ENCODE measurements at regions of chr6 and their contacts with region 1.

Region 1: DNA sequence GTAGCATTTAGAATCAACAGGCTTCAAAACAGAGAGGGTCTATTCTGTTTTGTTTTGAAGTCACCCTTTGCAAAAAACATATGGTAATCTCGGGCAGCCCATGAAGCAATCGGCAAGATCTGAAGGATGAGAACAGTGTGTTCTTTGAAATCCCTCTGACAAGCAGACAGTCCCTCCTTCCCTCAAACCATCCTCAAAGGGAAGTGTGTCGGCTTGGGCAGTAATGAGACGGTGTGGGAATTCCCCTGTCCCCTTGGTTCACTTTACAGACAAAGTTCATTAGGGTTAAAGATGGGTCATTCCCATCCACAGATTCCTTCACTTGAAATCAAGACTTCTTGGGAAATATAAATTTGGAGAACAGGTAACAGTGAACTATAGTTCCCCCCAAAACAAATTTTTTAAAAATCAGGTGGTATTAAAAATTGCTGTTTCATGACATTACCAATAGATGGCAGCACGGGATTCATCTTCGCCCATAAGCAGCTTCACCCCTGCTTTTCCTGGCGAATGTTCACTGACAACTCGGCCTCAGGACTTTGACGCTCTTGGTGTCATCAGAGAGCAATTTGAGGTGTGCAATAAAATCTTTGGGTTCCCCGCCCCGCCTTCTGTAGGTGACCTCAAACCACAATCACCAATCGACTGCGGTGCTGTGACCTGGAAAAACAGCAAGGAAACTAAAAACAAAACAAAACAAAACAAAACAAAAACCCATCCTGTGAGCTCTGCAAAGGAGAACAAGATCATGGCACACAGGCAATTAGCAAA is 159.3 kb upstream of the TNFAIP3 start:
- DNase-seq: peak; percentile 57 to 98 (median 76)
- ATAC-seq: peak; percentile 76
- H3K4me3 ChIP-seq: no peak overlapping the region
- H3K4me3 Mint-ChIP-seq: peak overlapping the region; percentile 75
- H3K27ac ChIP-seq: peak overlapping the region; percentile 67 to 89
- H3K27ac Mint-ChIP-seq: peak overlapping the region; percentile 88
- H3K4me1 ChIP-seq: peaks cover 57% of the 10 kb centered on the region
- H3K4me1 Mint-ChIP-seq: peaks cover 54% of the 10 kb centered on the region
- H3K27me3 ChIP-seq: no peaks in the 10 kb centered on the region
- H3K27me3 Mint-ChIP-seq: no peaks in the 10 kb centered on the region
- CTCF ChIP-seq: peak; percentile 79

Region 2: GRCh38 chr6:137823826-137824555 is 116.2 kb after region 1 on chr6:
- CTCF ChIA-PET with region 1: interaction called, 18 read pairs
- POLR2A ChIA-PET with region 1: interaction called, 15 read pairs
- intact Hi-C with region 1: loop called in 1 of 2 experiments (anchors 1 kb)
- DNase-seq: peak; percentile 43 to 98 (median 76)
- ATAC-seq: peak; percentile 71
- H3K4me3 ChIP-seq: peak overlapping the region; percentile 21
- H3K4me3 Mint-ChIP-seq: peak overlapping the region; percentile 69
- H3K27ac ChIP-seq: peak overlapping the region; percentile 93 to 94
- H3K27ac Mint-ChIP-seq: peak overlapping the region; percentile 96
- H3K4me1 ChIP-seq: peaks cover 53% of the 10 kb centered on the region
- H3K4me1 Mint-ChIP-seq: peaks cover 70% of the 10 kb centered on the region
- H3K27me3 ChIP-seq: no peaks in the 10 kb centered on the region
- H3K27me3 Mint-ChIP-seq: no peaks in the 10 kb centered on the region
- CTCF ChIP-seq: no peak

Region 3: DNA sequence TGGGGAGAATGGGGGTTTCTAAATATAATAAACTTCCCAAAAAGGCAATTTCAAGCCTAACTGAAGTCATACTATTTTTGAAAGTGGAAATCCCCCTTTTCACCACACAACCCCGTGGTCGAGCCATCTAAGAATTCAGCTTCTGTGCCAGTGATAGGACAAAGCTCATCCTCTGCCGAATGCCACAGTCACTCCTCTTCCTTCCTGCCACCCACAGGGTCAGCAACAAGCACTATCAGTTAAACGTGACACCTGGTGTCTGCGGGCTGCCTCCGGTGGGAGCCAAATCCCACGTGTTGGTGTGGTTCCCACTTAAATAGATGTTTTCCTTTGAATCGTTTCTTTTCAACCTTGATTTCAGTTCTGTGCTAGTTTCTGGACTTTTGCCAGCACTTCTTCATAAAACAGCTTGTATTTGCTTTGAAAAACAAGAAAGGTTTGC is 220.0 kb after region 1 on chr6:
- CTCF ChIA-PET with region 1: interaction called, 3 read pairs
- POLR2A ChIA-PET with region 1: interaction called, 6 read pairs
- intact Hi-C with region 1: loop called in 1 of 2 experiments (anchors 5 kb)
- DNase-seq: peak; percentile 32 to 93 (median 53)
- ATAC-seq: peak; percentile 99
- H3K4me3 ChIP-seq: no peak overlapping the region
- H3K4me3 Mint-ChIP-seq: peak overlapping the region; percentile 9
- H3K27ac ChIP-seq: peak overlapping the region in 1 of 2 donors; percentile 18
- H3K27ac Mint-ChIP-seq: peak overlapping the region; percentile 70
- H3K4me1 ChIP-seq: peaks cover 26% of the 10 kb centered on the region
- H3K4me1 Mint-ChIP-seq: peaks cover 45% of the 10 kb centered on the region
- H3K27me3 ChIP-seq: no peaks in the 10 kb centered on the region
- H3K27me3 Mint-ChIP-seq: no peaks in the 10 kb centered on the region
- CTCF ChIP-seq: no peak

Region 4: GRCh38 chr6:137975188-137975940 is 267.6 kb after region 1 on chr6:
- CTCF ChIA-PET with region 1: interaction called, 13 read pairs
- POLR2A ChIA-PET with region 1: interaction called, 22 read pairs
- intact Hi-C with region 1: loop called (anchors 1 kb)
- DNase-seq: peak in 5 of 14 experiments; percentile 17 to 85 (median 72)
- ATAC-seq: peak; percentile 81
- H3K4me3 ChIP-seq: peak overlapping the region; percentile 19
- H3K4me3 Mint-ChIP-seq: peak overlapping the region; percentile 82
- H3K27ac ChIP-seq: peak overlapping the region; percentile 64 to 72
- H3K27ac Mint-ChIP-seq: peak overlapping the region; percentile 84
- H3K4me1 ChIP-seq: peaks cover 37% of the 10 kb centered on the region
- H3K4me1 Mint-ChIP-seq: peaks cover 29% of the 10 kb centered on the region
- H3K27me3 ChIP-seq: no peaks in the 10 kb centered on the region
- H3K27me3 Mint-ChIP-seq: no peaks in the 10 kb centered on the region
- CTCF ChIP-seq: peak; percentile 60

Region 5: DNA sequence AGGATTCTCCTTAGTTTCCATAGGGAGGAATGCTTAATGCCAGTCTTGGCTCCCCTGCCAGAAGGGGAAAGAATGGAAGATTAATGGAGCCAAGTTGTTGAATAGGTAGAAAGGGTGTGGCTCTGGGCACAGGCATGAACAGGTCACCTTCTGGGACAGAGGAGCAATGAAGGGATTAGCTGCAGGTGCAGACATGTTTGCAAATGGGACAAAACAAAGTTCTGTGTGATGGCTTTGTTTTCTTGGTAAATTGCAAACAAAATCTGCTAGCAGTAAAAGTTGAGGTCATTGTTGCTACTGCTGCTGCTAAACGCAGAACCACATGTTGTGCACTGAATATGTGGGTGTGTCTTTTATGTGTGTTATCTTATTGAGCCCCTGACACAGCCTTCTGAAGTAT is 306.2 kb after region 1 on chr6:
- CTCF ChIA-PET with region 1: no interaction called
- POLR2A ChIA-PET with region 1: no interaction called
- intact Hi-C with region 1: no loop called
- DNase-seq: no peak
- ATAC-seq: no peak
- H3K4me3 ChIP-seq: no peak overlapping the region
- H3K4me3 Mint-ChIP-seq: no peak overlapping the region
- H3K27ac ChIP-seq: no peak overlapping the region
- H3K27ac Mint-ChIP-seq: no peak overlapping the region
- H3K4me1 ChIP-seq: no peaks in the 10 kb centered on the region
- H3K4me1 Mint-ChIP-seq: no peaks in the 10 kb centered on the region
- H3K27me3 ChIP-seq: no peaks in the 10 kb centered on the region
- H3K27me3 Mint-ChIP-seq: peaks cover 4% of the 10 kb centered on the region
- CTCF ChIP-seq: no peak

Region 6: DNA sequence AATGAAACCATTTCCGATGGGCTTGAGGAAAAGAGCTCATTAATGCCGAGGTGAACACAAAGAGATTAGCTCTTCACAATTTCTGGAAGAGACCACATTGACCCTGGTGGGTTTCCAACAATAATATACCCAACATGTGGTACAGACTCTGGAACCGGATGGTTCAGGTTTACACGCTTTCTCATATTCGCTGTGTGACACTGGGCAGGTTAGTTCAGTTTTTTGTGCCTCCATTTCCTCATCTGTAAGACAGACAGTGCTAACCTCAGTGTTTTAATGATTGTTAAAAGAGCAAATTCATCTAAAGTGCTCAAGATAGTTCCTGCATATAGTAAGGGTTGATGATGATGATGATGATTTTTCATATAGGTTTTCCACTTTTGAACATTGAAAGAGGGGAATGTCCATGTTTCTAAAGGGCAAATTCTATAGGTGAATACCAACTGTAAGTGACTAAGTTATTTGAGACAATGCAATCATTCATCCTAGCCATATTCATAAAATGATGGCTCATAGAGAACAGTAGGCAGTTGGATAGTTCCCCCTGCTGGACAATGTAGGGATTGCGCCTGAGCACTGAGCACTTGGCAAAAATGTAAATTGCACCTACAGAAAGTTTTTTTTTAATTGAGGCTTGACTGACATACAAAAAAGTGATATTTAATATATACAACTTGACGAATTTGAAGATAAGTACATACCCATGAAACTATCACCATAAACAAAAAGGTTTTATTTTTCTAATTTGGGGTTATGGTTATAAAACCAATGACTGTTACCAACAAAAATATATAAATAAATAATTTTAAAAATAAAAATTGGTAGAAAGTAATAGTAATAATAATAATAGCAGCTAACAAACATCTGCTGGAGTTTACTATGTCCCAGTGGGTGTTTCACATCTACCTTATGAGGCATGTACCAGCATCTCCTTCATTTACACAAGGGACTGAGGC is 401.5 kb after region 1 on chr6:
- CTCF ChIA-PET with region 1: no interaction called
- POLR2A ChIA-PET with region 1: no interaction called
- intact Hi-C with region 1: loop called (anchors 2 kb)
- DNase-seq: peak; percentile 63 to 88 (median 78)
- ATAC-seq: peak; percentile 61
- H3K4me3 ChIP-seq: no peak overlapping the region
- H3K4me3 Mint-ChIP-seq: peak overlapping the region; percentile 47
- H3K27ac ChIP-seq: no peak overlapping the region
- H3K27ac Mint-ChIP-seq: no peak overlapping the region
- H3K4me1 ChIP-seq: peaks cover 20% of the 10 kb centered on the region
- H3K4me1 Mint-ChIP-seq: peaks cover 24% of the 10 kb centered on the region
- H3K27me3 ChIP-seq: peaks cover 9 to 26% of the 10 kb centered on the region in 2 experiments
- H3K27me3 Mint-ChIP-seq: peaks cover 52% of the 10 kb centered on the region
- CTCF ChIP-seq: peak; percentile 92

Measured in CD4-positive, alpha-beta T cell (primary cell).